MCF 10A (cell line): ENCODE measurements at regions of chr11 and their contacts with region 1.

Region 1: GRCh38 chr11:4496557-4497275 is 14.3 kb downstream of the OR52K1 start:
- DNase-seq: peak; percentile 23
- H3K4me3 Mint-ChIP-seq: no peak overlapping the region
- H3K27ac Mint-ChIP-seq: no peak overlapping the region
- H3K4me1 Mint-ChIP-seq: no peaks in the 10 kb centered on the region
- H3K27me3 Mint-ChIP-seq: peaks cover 50% of the 10 kb centered on the region
- CTCF ChIP-seq: no peak

Region 2: DNA sequence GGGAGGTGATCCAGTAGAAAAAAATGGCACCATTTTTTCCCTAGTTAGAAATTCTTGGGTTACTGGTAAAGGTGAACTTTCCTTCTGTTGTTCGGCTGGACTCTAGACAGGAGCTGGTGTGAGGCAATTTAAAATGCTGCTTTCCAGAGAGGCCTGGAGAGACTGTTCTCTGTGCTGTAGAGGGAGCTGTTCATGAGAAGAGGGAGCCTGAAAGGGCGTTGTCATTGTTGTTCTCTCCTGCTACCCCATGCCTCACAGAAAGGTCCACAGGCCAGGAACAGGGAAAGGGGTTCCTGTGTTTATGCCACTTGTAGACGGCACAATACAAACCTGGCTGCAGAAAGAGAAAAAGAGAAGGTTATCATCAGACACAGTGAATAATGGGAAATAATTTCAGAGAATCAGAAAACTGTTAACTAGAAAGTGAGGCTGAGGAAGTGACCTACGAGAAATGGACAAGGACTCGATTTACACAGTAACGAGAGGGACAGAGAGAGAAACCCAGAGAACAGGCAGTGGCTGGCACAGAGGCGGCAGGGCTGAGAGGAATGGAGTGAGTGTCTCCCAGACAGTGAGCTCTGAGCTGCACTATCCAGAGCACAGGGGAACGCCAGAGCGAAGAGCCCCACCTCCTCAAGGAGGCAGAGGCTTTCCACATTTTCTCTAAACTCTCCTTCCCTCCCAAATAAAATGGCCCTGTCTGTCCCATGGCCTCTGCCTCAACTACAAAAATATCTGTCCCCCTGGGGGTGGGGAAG is 292.9 kb before region 1 on chr11:
- CTCF ChIA-PET with region 1: interaction called, 13 read pairs
- POLR2A ChIA-PET with region 1: no interaction called
- intact Hi-C with region 1: no loop called
- DNase-seq: no peak
- H3K4me3 Mint-ChIP-seq: no peak overlapping the region
- H3K27ac Mint-ChIP-seq: no peak overlapping the region
- H3K4me1 Mint-ChIP-seq: no peaks in the 10 kb centered on the region
- H3K27me3 Mint-ChIP-seq: peaks cover 13% of the 10 kb centered on the region
- CTCF ChIP-seq: no peak

Region 3: DNA sequence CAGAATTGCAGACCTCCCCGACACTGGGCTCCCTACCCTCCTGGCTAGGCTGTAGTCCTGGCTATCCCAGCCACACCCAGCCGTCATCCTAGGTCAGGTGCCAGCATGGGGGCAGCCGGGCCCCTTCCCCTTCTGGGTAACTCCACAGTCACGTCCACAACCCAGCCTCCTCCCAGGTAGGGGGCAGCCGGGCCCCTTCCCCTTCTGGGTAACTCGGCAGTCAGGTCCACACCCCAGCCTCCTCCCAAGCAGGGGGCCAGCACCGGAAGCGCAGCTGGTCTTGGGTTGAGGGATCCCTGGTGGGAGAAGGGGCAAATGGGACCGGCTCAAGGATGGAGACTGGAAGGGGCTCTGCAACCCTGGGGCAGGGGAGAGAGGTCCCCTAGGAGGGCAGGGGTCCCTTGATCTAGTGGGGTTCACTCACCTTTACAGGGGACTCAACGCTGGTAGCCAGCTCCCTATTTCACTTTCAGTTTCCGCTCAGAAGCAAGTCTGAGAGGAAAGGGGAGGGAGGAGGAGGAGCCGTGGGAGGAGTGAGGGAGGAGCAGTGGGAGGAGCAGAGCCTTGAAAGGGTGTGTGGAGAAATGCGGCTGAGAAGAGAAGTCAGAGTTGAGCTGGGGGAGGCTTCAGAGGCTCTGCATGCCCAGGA is 103.4 kb before region 1 on chr11 and contains the start of gene TRIM21:
- CTCF ChIA-PET with region 1: interaction called, 15 read pairs
- POLR2A ChIA-PET with region 1: no interaction called
- intact Hi-C with region 1: loop called (anchors 5 kb)
- DNase-seq: peak; percentile 93
- H3K4me3 Mint-ChIP-seq: peak within 1 kb of the TSS; percentile 83
- H3K27ac Mint-ChIP-seq: peak within 1 kb of the TSS; percentile 68
- H3K4me1 Mint-ChIP-seq: peaks cover 13% of the 10 kb centered on the region
- H3K27me3 Mint-ChIP-seq: no peaks in the 10 kb centered on the region
- CTCF ChIP-seq: no peak
- total RNA-seq, gene TRIM21: 6.4 and 11.8 TPM in 2 replicates

Region 4: DNA sequence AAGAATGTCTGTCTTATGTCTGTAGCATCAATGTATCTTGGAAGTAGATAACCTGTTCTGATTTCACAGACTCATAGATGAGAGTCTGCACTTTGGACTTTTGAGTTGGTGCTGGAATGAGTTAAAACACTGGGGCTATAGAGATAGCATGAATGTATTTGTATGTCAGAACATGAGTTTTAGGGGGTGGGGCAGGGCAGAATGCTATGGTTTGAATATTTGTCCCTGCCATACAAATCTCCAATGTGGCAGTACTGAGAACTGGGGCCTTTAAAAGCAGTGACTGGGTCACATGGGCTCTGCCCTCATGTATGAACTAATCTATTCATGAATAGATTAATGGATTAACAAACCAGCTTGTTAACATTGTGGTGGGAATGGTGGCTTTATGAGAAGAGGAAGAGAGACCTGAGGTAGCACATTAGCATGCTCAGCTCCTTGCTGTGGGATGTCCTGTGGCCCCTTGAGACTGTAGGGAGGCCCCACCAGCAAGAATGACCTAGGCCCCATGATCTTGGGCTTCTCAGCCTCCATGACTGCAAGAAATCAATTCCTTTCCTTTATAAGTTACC is 29.8 kb before region 1 on chr11:
- CTCF ChIA-PET with region 1: interaction called, 11 read pairs
- POLR2A ChIA-PET with region 1: no interaction called
- intact Hi-C with region 1: no loop called
- DNase-seq: no peak
- H3K4me3 Mint-ChIP-seq: no peak overlapping the region
- H3K27ac Mint-ChIP-seq: no peak overlapping the region
- H3K4me1 Mint-ChIP-seq: peaks cover 6% of the 10 kb centered on the region
- H3K27me3 Mint-ChIP-seq: no peaks in the 10 kb centered on the region
- CTCF ChIP-seq: no peak

Region 5: DNA sequence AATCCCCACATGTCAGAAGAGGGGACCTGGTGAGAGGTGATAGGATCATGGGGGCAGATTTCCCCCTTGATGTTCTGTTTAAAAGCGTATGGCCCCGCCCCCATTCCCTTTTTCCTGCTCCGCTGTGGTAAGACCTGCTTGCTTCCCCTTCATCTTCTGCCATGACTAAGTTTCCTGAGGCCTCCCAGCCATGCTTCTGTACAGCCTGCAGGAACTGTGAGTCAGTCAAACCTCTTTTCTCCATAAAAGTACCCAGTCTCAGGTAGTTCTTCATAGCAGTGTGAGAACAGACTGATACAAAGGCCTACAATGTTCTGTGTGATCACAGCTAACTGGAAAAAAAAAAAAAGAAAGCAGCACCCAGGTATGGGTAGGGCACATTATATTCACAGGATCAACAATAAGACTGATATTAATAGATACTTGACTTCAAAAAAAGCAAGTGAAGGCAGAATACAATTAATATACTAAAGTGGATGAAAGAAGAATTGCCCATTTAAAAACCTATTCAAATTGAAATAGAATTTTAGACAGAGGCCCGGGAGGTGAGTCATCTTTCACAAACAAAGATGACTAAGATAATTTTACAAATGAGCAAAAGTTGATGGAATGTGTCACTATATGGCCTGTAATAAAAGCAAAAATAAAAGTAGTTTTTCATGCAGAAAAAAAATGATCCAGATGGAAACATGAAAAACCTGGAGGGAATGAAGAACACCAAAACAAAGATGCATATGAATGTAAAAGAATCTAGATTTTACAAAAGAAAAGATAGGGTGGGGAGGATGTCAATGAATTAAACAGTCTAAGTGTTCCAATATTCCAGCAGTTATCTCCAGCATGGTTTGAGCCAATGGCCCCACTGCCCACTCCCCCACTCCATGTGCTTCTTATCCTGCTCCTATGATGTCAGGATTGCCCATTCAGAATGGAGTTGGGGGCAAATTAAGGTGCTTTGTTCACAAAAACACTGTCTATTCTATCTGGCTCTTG is 15.8 kb before region 1 on chr11:
- CTCF ChIA-PET with region 1: interaction called, 19 read pairs
- POLR2A ChIA-PET with region 1: no interaction called
- intact Hi-C with region 1: no loop called
- DNase-seq: peak; percentile 38
- H3K4me3 Mint-ChIP-seq: no peak overlapping the region
- H3K27ac Mint-ChIP-seq: peak overlapping the region; percentile 57
- H3K4me1 Mint-ChIP-seq: peaks cover 12% of the 10 kb centered on the region
- H3K27me3 Mint-ChIP-seq: no peaks in the 10 kb centered on the region
- CTCF ChIP-seq: no peak

Region 6: GRCh38 chr11:4531676-4532075 is 35.0 kb after region 1 on chr11:
- CTCF ChIA-PET with region 1: interaction called, 12 read pairs
- POLR2A ChIA-PET with region 1: no interaction called
- intact Hi-C with region 1: loop called (anchors 5 kb)
- DNase-seq: no peak
- H3K4me3 Mint-ChIP-seq: no peak overlapping the region
- H3K27ac Mint-ChIP-seq: no peak overlapping the region
- H3K4me1 Mint-ChIP-seq: no peaks in the 10 kb centered on the region
- H3K27me3 Mint-ChIP-seq: peaks cover 12% of the 10 kb centered on the region
- CTCF ChIP-seq: no peak

Region 7: DNA sequence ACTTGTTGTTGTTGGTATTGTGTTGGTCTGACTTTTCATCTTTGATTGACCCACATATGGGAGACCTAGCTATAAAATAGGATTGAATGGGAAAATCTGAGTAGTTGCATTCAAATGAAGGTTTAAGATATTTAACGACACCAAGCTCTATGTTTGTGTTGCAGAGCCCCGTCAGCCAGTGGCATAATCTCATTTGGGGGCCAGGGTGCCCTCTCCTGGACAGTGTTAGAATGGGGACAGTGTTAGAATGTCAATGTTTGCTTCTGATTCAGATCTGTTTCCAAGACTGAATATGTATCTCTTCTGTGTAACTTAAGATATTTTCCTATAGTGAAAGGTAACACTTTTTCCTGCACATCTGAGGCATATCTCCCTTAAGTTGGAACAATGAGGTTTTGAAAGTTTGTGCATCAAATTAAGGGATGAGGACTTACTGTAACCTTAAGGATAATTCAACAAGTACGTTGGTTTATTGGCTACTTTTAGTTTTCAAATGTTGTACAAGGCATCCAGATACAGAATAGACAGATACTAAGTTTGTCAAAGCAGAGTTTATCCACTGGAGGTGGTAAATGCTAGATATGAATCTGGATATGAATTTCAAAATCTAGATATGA is 43.0 kb after region 1 on chr11:
- CTCF ChIA-PET with region 1: interaction called, 40 read pairs
- POLR2A ChIA-PET with region 1: no interaction called
- intact Hi-C with region 1: loop called (anchors 5 kb)
- DNase-seq: peak; percentile 65
- H3K4me3 Mint-ChIP-seq: no peak overlapping the region
- H3K27ac Mint-ChIP-seq: no peak overlapping the region
- H3K4me1 Mint-ChIP-seq: peaks cover 10% of the 10 kb centered on the region
- H3K27me3 Mint-ChIP-seq: no peaks in the 10 kb centered on the region
- CTCF ChIP-seq: peak; percentile 65